ENCODE measurements at regions of chr7 and their contacts with region 1.

Region 1: DNA sequence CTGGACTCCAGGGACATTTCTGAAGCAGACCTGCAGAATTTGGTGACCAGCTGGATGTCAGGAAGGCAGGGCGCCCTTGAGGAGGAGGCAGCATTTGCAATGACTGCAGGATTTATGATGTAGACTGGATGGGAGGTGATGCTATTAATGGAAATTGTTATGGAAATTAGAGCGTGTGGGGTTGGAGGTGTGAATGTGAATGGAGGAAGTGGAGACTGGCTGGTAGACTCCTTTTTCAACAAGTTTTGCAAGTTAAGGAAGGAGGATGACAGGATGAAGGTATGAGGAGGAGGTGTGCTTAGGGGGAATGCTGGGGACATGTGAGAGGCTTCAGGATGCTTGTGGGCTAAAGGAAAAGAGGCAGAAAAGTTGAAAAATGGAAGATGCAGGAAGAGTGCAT is 137.0 kb downstream of the TMEM178B start:
- DNase-seq: no peak
- H3K4me3 ChIP-seq: no peak overlapping the region
- H3K27ac ChIP-seq: no peak overlapping the region
- H3K4me1 ChIP-seq: no peaks in the 10 kb centered on the region
- H3K27me3 ChIP-seq: peaks cover 0 to 2% of the 10 kb centered on the region in 2 donors
- CTCF ChIP-seq: no peak

Region 2: DNA sequence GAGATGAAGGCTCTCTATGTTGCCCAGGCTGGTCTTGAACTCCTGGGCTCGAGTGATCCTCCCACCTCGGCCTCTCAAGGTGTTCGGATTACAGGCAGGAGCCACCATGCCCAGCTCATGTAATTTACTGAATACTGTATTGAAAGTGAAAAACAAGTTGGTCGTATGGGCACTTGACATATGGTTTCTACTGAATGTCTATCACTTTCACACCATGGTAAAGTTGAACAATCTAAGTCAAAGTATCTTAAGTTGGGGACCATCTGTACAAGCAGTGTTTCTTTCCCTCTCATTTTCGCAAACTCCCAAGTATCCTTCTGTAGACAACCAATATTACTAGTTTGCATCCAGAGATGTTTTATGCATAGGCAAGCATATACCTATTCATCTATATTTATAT is 20.4 kb before region 1 on chr7:
- intact Hi-C with region 1: loop called (anchors 2 kb)
- DNase-seq: no peak
- H3K4me3 ChIP-seq: no peak overlapping the region
- H3K27ac ChIP-seq: no peak overlapping the region
- H3K4me1 ChIP-seq: no peaks in the 10 kb centered on the region
- H3K27me3 ChIP-seq: no peaks in the 10 kb centered on the region
- CTCF ChIP-seq: no peak

Measured in tibial artery (tissue), 4 donors.